Activated CD4-positive, alpha-beta T cell treated with anti-CD3 and anti-CD28 coated beads for 36 hours (primary cell): ENCODE measurements at regions of chr1 and their contacts with region 1.

Region 1: DNA sequence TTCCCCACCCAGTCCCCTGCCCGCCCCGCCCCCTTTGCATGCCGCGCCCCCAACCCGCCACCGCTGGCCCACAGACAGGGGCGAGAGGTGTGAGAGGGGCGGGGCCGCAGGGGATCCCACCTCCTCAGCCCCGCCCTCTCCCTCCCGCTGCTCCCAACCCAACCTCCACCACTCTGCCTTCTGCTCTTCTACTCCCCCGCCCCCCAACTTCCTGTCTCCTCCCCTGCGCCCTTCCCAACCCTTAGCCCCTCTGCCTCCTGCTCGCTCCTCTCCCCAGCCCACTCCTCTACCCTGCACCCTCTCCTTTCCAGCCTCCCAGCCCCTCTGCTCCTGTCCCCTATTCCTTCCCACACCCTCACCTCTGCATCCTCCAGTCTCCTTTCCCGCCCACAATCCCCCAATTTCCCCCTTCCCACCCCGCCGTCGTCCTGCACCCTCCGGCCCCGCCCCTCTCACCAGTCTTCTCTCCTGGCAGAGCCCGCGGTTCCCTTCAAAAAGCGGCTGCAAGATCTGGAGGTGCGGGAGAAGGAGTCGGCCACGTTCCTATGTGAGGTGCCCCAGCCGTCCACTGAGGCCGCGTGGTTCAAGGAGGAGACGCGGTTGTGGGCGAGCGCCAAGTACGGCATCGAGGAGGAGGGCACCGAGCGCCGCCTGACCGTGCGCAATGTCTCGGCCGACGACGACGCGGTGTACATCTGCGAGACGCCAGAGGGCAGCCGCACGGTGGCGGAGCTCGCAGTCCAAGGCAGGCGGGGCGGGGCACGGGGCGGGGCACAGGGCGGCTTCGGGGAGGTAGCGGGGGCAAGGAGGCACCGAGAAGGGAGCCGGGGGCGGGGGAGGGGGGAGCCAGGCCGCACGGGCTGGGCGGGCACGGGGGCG is 5.4 kb downstream of the OBSCN start:
- DNase-seq: peak; percentile 96
- ATAC-seq: peak; percentile 94
- H3K4me3 Mint-ChIP-seq: peak overlapping the region; percentile 78
- H3K27ac Mint-ChIP-seq: peak overlapping the region; percentile 75
- H3K4me1 Mint-ChIP-seq: no peaks in the 10 kb centered on the region
- H3K27me3 Mint-ChIP-seq: no peaks in the 10 kb centered on the region

Region 2: DNA sequence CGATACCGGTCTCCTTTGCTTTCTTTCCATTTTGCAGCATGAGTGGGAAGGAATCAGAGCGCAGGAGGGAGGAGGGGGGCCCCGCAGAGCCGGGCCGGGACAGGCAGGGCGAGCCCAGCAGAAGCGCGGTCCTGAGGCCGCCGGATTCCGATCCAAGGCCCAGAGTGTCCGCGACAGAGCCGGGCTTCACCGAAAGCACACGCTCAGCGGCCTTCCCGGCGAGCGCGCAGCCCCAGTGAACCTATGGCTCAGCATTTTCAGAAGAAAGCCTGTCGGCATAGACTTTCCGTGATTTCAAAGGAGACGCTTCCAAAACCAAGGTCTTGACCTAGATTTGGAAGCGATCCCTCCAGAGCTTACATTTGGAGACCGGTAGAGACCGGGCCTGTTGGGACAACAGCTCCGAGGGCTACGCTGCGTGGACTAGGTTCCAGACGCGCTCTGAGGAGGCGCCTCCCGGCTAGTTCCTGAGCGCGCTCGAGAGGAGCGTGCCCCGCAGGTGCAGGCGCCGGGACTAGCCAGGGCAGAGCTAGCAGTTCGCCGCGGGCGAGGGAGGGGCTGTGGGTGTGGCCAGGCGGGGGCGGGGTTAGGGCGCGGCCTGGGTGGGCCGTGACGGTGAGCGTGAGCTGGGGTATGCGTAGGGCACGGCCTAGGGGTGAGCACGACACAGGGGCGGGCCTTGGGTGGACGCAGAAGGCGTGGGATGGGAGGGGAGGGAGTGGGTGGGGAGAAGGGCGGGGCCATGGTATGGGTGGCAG is 425.5 kb before region 1 on chr1:
- CTCF ChIA-PET with region 1: no interaction called
- POLR2A ChIA-PET with region 1: no interaction called
- intact Hi-C with region 1: loop called in 1 of 2 experiments (anchors 1 kb)
- DNase-seq: peak; percentile 96
- ATAC-seq: peak; percentile 93
- H3K4me3 Mint-ChIP-seq: peak overlapping the region; percentile 69
- H3K27ac Mint-ChIP-seq: peak overlapping the region; percentile 22
- H3K4me1 Mint-ChIP-seq: peaks cover 14% of the 10 kb centered on the region
- H3K27me3 Mint-ChIP-seq: no peaks in the 10 kb centered on the region

Region 3: GRCh38 chr1:228131766-228132165 is 81.4 kb before region 1 on chr1:
- CTCF ChIA-PET with region 1: interaction called, 3 read pairs
- POLR2A ChIA-PET with region 1: no interaction called
- intact Hi-C with region 1: loop called in 1 of 2 experiments (anchors 1 kb)
- DNase-seq: no peak
- ATAC-seq: no peak
- H3K4me3 Mint-ChIP-seq: no peak overlapping the region
- H3K27ac Mint-ChIP-seq: no peak overlapping the region
- H3K4me1 Mint-ChIP-seq: peaks cover 3% of the 10 kb centered on the region
- H3K27me3 Mint-ChIP-seq: peaks cover 5% of the 10 kb centered on the region

Region 4: DNA sequence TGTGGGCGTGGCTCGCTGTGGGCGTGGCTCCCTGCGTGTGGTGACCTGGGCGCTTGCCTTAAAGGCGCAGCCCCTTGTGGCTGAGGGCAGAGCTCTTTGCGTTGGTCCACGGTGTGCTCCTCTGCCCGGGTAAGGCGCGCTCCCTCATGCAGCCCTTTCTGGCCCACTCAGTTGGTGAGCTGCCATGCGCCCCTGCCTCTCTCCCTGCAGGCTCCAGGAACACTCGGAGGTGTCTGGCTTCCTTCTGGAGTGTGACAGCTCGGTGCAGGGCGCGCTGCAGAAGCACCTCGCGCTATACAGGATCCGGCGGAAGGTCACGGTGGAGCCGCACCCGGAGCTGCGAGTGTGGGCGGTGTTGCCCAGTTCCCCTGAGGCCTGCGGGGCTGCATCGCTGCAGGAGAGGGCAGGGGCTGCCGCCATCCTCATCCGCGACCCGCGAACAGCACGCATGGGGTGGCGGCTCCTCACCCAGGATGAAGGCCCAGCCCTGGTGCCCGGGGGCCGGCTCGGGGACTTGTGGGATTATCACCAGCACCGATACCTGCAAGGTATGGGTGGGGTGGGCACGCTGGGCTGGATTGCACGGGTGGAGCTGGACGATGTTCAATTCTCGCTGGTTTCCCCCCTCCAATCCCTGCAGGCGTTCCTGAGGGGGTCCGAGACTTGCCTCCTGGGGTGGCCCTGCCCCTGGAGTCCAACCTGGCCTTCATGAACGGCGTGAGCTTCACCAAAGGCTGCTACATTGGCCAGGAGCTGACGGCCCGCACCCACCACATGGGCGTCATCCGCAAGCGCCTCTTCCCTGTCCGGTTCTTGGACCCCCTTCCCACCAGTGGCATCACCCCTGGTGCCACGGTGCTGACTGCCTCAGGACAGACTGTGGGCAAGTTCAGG is 38.5 kb before region 1 on chr1:
- CTCF ChIA-PET with region 1: interaction called, 4 read pairs
- POLR2A ChIA-PET with region 1: no interaction called
- intact Hi-C with region 1: loop called (anchors 1 kb)
- DNase-seq: peak; percentile 59
- ATAC-seq: peak; percentile 67
- H3K4me3 Mint-ChIP-seq: no peak overlapping the region
- H3K27ac Mint-ChIP-seq: no peak overlapping the region
- H3K4me1 Mint-ChIP-seq: no peaks in the 10 kb centered on the region
- H3K27me3 Mint-ChIP-seq: no peaks in the 10 kb centered on the region

Region 5: GRCh38 chr1:228224198-228225164 is 11.3 kb after region 1 on chr1:
- CTCF ChIA-PET with region 1: no interaction called
- POLR2A ChIA-PET with region 1: no interaction called
- intact Hi-C with region 1: no loop called
- DNase-seq: no peak
- ATAC-seq: no peak
- H3K4me3 Mint-ChIP-seq: no peak overlapping the region
- H3K27ac Mint-ChIP-seq: no peak overlapping the region
- H3K4me1 Mint-ChIP-seq: no peaks in the 10 kb centered on the region
- H3K27me3 Mint-ChIP-seq: no peaks in the 10 kb centered on the region

Region 6: GRCh38 chr1:228291961-228292911 is 79.0 kb after region 1 on chr1:
- CTCF ChIA-PET with region 1: no interaction called
- POLR2A ChIA-PET with region 1: no interaction called
- intact Hi-C with region 1: no loop called
- DNase-seq: no peak
- ATAC-seq: no peak
- H3K4me3 Mint-ChIP-seq: no peak overlapping the region
- H3K27ac Mint-ChIP-seq: no peak overlapping the region
- H3K4me1 Mint-ChIP-seq: no peaks in the 10 kb centered on the region
- H3K27me3 Mint-ChIP-seq: no peaks in the 10 kb centered on the region

Region 7: DNA sequence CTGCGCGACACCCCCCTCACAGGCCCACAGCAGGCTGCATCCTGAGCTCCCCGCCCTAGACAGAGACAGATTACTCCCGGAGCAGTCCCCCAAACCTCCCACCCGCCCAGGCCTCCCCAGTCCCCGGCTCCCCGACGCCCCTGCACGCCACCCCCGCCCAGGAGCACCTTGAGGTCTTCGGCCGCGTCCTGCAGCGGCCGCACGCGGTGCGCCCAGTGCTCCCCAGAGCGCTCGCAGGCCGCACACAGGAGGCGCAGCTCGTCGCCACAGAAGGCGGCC is 192.7 kb after region 1 on chr1:
- CTCF ChIA-PET with region 1: no interaction called
- POLR2A ChIA-PET with region 1: no interaction called
- intact Hi-C with region 1: loop called in 1 of 2 experiments (anchors 1 kb)
- DNase-seq: no peak
- ATAC-seq: peak; percentile 2
- H3K4me3 Mint-ChIP-seq: peak overlapping the region; percentile 92
- H3K27ac Mint-ChIP-seq: peak overlapping the region; percentile 93
- H3K4me1 Mint-ChIP-seq: peaks cover 46% of the 10 kb centered on the region
- H3K27me3 Mint-ChIP-seq: no peaks in the 10 kb centered on the region

Region 8: GRCh38 chr1:228486596-228487335 is 273.6 kb after region 1 on chr1:
- CTCF ChIA-PET with region 1: no interaction called
- POLR2A ChIA-PET with region 1: no interaction called
- intact Hi-C with region 1: loop called in 1 of 2 experiments (anchors 1 kb)
- DNase-seq: peak; percentile 87
- ATAC-seq: peak; percentile 66
- H3K4me3 Mint-ChIP-seq: peak overlapping the region; percentile 96
- H3K27ac Mint-ChIP-seq: peak overlapping the region; percentile 99
- H3K4me1 Mint-ChIP-seq: peaks cover 40% of the 10 kb centered on the region
- H3K27me3 Mint-ChIP-seq: no peaks in the 10 kb centered on the region